Tibial artery (tissue), 4 donors: ENCODE measurements at regions of chr15 and their contacts with region 1.

Region 1: DNA sequence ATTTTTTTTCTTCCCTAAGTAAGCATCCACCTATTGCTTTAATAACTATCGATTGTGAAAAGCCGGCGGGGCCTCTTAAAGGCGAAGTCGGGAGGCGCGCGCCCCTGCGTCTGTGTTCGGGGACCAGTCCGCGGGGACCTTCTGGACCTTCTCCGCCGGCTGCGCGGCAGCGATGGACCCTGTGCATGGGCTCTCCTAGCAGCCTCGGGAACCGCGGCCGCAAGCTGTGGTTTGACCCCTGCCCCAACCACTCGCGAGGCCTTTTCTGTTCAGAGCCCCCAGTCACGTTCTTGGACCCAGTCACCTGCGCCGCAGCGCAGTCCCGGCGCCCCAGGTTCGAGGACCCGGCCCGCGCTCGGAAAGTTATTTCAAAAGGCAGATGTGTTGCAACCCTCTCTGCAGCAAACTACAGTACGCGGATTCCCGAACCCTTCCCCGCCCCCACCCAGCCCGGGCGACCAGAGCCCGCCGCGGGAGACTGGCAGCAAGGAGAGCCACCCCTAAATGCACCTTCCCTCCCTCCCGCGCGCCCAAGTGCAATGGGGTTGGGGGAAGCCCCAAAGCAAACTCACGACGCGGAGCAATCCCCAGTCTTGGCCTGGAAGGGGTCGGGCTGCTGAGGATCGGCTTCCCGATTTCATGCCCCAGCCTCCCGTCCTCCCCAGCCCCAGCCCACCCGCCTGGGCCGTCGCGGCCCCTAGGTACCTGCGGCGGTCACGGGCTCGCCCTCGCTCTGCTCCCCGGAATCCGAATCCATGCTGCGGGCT is 684 bp downstream of the TNFAIP8L3 start:
- DNase-seq: peak; percentile 75 to 89
- H3K4me3 ChIP-seq: peak overlapping the region; percentile 88 to 92
- H3K27ac ChIP-seq: peak overlapping the region; percentile 91 to 95
- H3K4me1 ChIP-seq: peaks cover 0 to 74% (median 25%) of the 10 kb centered on the region in 4 donors
- H3K27me3 ChIP-seq: no peaks in the 10 kb centered on the region
- CTCF ChIP-seq: no peak

Region 2: GRCh38 chr15:51114437-51115119 is 20.6 kb after region 1 on chr15:
- intact Hi-C with region 1: loop called (anchors 2 kb)
- DNase-seq: peak; percentile 61 to 85
- H3K4me3 ChIP-seq: no peak overlapping the region
- H3K27ac ChIP-seq: peak overlapping the region; percentile 57 to 66
- H3K4me1 ChIP-seq: peaks cover 0 to 53% (median 38%) of the 10 kb centered on the region in 4 donors
- H3K27me3 ChIP-seq: no peaks in the 10 kb centered on the region
- CTCF ChIP-seq: no peak